Dorsolateral prefrontal cortex (tissue), 120 donors: ENCODE measurements at regions of chr2 and their contacts with region 1.

Region 1: DNA sequence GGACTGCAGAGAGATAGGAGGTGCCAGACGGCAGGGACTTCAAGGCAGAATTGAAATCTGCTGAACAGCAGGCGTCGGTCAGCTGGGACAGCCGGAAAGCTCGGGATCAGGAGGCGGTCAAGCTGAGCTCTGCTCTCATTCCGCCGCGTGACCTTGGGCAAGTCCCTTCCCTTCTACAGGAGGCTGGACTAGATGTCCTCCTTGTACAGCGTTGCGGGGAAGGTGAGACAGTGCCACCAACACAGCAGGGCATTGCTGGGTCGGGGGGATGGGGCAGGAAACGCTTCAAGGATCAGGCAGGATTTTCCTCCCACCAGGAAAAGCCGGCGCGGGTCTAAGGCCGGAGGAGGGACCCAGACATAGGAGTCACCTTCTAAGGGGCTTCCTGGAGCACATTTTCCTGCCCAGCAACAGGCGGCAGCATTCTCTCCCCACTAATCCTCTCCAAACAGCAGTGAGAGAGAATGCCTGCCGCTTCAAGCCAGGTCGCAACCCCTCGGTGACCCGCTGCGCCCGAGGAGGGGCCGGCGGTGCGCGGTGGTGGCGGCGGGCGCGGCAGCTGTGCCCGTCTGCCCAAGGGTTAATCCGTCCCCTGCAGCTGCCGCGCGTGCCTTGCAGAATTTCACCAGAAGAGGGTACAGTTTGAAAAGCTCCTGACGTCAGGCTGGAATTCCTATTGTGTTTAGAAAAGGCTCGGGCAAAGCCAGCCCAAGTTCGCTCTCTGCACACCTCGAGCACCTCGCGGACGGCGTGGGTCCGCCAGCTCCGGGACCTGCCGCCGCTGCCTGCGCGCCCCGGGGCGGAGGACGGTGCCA is at the start of gene KCNF1:
- DNase-seq: peak in 3 of 10 donors; percentile 53 to 65 (median 63)
- H3K4me3 ChIP-seq: peak within 1 kb of the TSS; percentile 25 to 70 (median 56)
- H3K27ac ChIP-seq: peak within 1 kb of the TSS in 50 of 59 donors; percentile 13 to 86 (median 70)
- H3K27me3 ChIP-seq: peaks cover 0 to 38% (median 6%) of the 10 kb centered on the region in 45 donors
- CTCF ChIP-seq: peak in 23 of 56 donors; percentile 8 to 40 (median 18)
- total RNA-seq, gene KCNF1: 16.9 to 84.7 (median 42.5) TPM

Region 2: GRCh38 chr2:10832203-10832936 is 79.1 kb before region 1 on chr2:
- intact Hi-C with region 1: loop called (anchors 5 kb)
- DNase-seq: peak; percentile 73 to 88 (median 86)
- H3K4me3 ChIP-seq: peak overlapping the region in 32 of 59 donors; percentile 0 to 42 (median 24)
- H3K27ac ChIP-seq: peak overlapping the region in 32 of 59 donors; percentile 2 to 80 (median 52)
- H3K27me3 ChIP-seq: peaks cover 0 to 8% (median 0%) of the 10 kb centered on the region in 45 donors
- CTCF ChIP-seq: peak; percentile 83 to 99 (median 97)